ENCODE measurements at regions of chr12 and their contacts with region 1.

Region 1: DNA sequence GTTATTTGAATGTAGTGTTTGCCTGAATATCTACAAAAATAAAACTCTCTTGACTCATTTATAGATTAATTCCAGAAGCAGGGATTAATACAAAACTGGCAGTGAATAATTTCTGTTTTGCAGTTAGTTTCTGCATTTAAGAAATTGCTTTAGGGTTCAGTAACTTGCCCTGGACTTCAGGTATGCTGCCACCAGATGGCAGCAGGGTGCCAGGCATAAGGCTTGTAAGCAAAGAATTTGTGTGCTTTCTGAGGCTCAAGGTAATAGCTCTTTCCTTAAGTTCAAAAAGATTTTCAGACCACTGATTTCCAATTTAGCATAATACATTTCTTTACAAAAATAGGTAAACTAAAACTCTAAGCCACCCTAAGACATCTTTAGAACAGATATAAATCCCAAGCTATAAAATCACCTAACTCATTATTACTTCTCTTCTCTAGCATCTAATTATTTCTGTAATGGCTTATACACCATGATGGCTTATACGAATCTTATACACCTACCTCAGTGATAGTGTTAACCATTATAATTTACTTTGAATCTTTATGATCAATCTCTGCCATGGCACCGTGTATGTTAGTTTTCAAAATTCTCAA is 398.3 kb downstream of the APAF1 start:
- DNase-seq: peak; percentile 85
- H3K4me3 ChIP-seq: no peak overlapping the region
- H3K27ac ChIP-seq: no peak overlapping the region
- H3K4me1 ChIP-seq: peaks cover 18% of the 10 kb centered on the region
- CTCF ChIP-seq: peak; percentile 99

Region 2: DNA sequence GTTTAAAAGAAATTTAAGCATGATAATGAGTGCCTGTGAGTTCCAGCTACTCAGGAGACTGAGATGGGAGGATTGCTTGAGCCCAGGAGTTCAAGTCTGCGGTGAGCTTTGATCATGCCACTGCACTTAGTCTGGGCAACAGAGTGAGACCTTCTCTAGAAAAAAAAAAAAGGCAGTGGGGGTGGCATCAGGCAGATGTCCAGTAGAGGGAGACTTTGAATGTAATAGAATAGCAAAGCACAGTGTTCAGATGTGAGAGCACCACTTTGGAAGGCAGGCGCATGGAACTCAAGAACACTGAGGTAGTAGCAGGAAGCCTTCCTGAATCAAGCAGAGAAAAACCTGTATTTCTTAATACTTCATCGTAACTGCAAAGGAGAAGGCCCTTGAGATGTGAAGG is 209.7 kb after region 1 on chr12:
- CTCF ChIA-PET with region 1: no interaction called
- POLR2A ChIA-PET with region 1: no interaction called
- intact Hi-C with region 1: loop called (anchors 10 kb)
- DNase-seq: peak; percentile 74
- H3K4me3 ChIP-seq: no peak overlapping the region
- H3K27ac ChIP-seq: no peak overlapping the region
- H3K4me1 ChIP-seq: peaks cover 12% of the 10 kb centered on the region
- CTCF ChIP-seq: peak; percentile 76

Region 3: DNA sequence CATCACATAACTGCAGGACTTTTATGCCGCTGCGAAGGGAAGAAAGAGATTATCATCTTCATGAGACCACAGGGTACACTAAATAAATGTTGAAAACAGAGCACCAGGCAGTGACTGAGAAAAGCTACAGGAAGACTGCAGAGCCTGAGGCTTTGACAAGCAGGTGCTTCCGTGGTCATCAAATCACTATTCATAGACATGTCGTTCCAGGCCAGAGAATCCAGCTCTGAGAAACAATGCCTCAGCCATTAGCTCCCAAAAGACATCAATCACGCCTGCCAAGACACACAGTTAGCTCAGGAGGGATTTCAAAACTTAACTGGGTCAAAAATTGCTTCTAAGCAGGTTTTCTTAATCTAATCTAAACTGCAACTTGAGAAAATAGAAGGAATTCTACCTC is 557.0 kb after region 1 on chr12:
- CTCF ChIA-PET with region 1: interaction called, 3 read pairs
- POLR2A ChIA-PET with region 1: no interaction called
- intact Hi-C with region 1: loop called (anchors 5 kb)
- DNase-seq: peak; percentile 99
- H3K4me3 ChIP-seq: peak overlapping the region; percentile 41
- H3K27ac ChIP-seq: peak overlapping the region; percentile 99
- H3K4me1 ChIP-seq: peaks cover 49% of the 10 kb centered on the region
- CTCF ChIP-seq: no peak

Region 4: GRCh38 chr12:99619389-99620158 is 576.2 kb after region 1 on chr12:
- CTCF ChIA-PET with region 1: interaction called, 3 read pairs
- POLR2A ChIA-PET with region 1: interaction called, 3 read pairs
- intact Hi-C with region 1: loop called (anchors 1 kb)
- DNase-seq: peak; percentile 67
- H3K4me3 ChIP-seq: no peak overlapping the region
- H3K27ac ChIP-seq: peak overlapping the region; percentile 22
- H3K4me1 ChIP-seq: no peaks in the 10 kb centered on the region
- CTCF ChIP-seq: peak; percentile 91

Region 5: GRCh38 chr12:99658671-99659349 is 615.4 kb after region 1 on chr12:
- CTCF ChIA-PET with region 1: interaction called, 14 read pairs
- POLR2A ChIA-PET with region 1: interaction called, 22 read pairs
- intact Hi-C with region 1: loop called (anchors 1 kb)
- DNase-seq: peak; percentile 64
- H3K4me3 ChIP-seq: no peak overlapping the region
- H3K27ac ChIP-seq: peak overlapping the region; percentile 62
- H3K4me1 ChIP-seq: peaks cover 41% of the 10 kb centered on the region
- CTCF ChIP-seq: peak; percentile 94

Region 6: DNA sequence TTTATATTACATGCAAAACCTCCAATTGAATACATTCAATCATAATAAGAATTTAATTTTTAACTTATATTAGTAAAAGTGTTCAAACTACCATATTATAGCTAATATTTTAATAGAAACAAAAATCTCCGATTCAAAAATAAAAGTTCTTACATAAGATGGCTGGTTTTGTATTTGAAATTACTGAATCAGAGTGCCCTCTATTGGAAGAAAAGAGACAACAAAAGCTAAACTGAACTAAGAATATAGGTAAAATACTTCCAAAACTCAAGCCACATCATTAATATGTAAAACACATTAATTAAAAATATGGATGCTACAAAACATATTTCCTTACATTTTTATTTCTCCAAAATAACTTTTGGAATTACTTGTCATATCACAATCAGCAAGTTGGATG is 724.4 kb after region 1 on chr12:
- CTCF ChIA-PET with region 1: no interaction called
- POLR2A ChIA-PET with region 1: interaction called, 4 read pairs
- intact Hi-C with region 1: loop called (anchors 2 kb)
- DNase-seq: peak; percentile 59
- H3K4me3 ChIP-seq: no peak overlapping the region
- H3K27ac ChIP-seq: no peak overlapping the region
- H3K4me1 ChIP-seq: peaks cover 31% of the 10 kb centered on the region
- CTCF ChIP-seq: peak; percentile 89